OCI-LY7 (cell line): ENCODE measurements at regions of chr12 and their contacts with region 1.

Region 1: DNA sequence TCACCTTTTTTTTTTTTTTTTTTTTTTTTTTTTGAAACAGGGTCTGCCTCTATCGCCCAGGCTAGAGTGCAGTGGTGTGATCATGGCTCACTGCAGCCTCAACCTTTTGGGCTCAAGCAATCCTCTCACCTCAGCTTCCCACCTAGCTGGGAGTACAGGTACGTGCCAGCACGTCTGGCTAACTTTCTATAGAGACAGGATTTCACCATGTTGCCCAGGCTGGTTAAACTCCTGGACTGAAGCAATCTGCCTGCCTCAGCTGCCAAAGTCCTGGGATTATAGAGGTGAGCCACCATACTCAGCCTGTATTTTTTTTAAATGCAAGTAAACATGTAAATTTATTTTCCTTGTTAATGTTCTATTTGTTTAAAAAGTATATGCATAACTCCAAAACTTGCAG is 80.4 kb downstream of the EEA1 start:
- DNase-seq: no peak
- H3K4me3 ChIP-seq: no peak overlapping the region
- H3K27ac ChIP-seq: no peak overlapping the region
- H3K4me1 ChIP-seq: no peaks in the 10 kb centered on the region
- CTCF ChIP-seq: no peak

Region 2: DNA sequence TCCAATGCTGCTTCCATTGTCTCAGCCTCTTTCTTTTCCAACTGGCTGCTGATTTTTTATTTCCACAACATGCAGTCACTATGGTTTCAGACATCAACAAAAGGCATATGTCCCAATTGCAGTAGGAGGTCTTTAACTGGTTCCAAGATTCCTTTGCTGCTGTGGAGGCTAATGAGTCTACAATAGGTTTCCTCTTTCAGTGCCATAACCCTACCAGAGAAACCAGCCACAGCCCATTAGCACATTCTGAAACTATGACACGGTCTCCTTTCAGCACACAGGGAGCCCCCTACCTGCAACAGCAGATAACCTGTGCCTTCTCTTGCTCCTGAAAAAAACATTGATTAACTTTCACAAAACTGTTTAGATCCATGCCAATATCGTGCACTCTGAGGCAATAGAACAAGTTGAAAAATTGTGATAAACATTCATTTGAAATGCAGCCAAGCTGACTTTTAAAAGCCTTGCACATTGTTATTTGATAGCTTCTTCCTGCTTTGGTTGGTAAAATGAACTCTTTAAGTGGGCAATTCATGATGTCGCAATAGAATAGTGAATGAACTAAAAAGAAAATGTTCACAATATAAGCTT is 113.5 kb before region 1 on chr12:
- CTCF ChIA-PET with region 1: no interaction called
- POLR2A ChIA-PET with region 1: interaction called, 11 read pairs
- intact Hi-C with region 1: no loop called
- DNase-seq: no peak
- H3K4me3 ChIP-seq: no peak overlapping the region
- H3K27ac ChIP-seq: no peak overlapping the region
- H3K4me1 ChIP-seq: no peaks in the 10 kb centered on the region
- CTCF ChIP-seq: 0 out of 2 replicates have a peak, but pooled peaks have one; percentile 22